Right ventricle myocardium superior (tissue), 1 donor: ENCODE measurements at regions of chr18 and their contacts with region 1.

Region 1: GRCh38 chr18:49510393-49511115 is 23.5 kb upstream of the C18orf32 start:
- DNase-seq: peak; percentile 46
- ATAC-seq: peak; percentile 80

Region 2: DNA sequence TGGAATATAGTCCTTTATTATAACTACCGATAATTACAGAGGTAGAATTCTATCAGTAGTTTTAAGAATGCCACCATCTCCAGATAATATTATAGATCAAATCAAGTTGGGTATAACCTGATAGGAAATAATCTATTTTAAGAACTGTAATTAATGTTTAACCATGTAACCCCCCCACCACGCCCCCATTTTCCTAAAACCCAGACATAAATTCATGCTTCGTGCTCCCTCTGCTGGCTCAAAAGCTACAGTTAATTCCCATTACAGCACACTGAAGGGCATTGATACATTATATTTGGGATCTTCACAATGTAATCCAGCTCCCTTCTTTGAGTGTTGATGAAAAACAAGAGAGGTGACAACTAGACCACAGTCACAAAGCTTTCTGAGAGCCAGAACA is 331.8 kb before region 1 on chr18:
- intact Hi-C with region 1: no loop called
- DNase-seq: no peak
- ATAC-seq: no peak

Region 3: GRCh38 chr18:49858309-49859020 is 347.9 kb after region 1 on chr18:
- intact Hi-C with region 1: loop called (anchors 5 kb)
- DNase-seq: peak; percentile 58
- ATAC-seq: peak; percentile 76

Region 4: DNA sequence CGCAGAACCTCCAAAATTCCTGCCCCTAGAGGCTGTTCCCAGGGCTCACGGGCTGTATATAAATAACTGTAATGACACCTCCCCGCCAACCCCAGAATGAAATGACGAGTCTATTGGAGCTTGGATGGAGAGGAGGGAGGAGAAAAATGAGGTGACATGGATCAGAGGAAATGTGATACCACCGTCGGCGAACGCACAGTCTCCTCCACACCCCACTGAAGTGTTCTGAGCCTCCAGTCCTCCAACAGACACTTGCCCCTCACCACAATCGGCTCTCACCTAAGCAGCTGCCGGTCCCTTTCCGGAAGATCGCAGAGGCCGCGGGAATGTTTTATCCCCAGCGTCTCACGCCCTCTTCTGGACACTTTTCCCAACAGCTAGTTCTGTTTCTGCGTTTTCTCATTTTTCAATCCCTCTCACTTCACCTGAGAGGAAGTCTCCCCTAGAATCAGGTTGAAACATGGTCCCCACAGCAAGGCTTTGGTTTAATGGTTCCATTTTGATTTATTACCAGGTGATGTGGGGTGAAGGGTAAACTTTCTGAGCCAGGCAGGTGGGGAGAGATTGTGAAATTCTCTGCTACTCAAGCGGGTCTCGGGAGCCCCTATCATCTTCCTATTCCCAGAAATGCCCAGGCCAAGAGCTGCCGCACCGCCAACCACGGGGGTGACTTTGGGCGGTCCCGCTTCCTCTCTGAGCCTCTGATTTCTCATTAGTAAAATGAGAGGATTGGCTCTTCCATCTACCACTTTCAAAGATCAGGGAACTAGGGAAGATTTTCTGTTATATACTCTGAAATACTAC is 693.4 kb after region 1 on chr18:
- intact Hi-C with region 1: loop called (anchors 10 kb)
- DNase-seq: no peak
- ATAC-seq: peak; percentile 70